ENCODE measurements at regions of chr5 and their contacts with region 1.

Region 1: DNA sequence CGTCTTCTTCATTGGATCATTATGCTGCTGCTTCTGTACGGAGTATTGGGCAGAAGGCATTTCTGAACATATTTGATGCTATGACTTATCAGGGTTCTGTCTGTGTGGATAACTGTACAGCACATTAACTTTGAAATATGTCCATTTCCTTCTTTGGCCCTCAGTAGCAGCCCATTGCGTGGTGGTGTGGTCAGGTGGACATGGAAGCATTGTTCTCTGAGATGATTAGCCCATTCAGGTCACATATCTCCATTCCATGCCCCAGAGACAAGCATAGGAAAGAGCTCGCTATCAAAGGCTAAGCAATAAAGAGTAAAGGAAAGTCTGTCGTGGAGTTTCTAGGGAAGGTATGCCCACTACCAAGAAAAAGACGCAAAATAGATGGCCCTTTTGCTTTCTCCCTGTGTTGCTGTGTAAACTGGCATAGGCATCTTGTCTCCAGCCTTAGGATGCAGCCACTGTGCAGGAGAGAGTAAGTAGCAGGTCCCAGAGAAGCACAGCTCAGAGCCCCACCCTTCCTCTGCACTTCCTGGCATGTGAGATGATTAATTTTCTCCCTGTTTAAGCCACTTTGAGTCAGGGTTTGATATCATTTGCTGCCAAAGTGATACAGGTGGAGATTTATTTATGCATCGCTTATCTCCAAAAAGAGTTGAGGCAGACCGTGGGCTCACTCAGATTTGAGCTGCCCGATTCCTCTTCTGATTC is 221.9 kb downstream of the PDZD2 start:
- DNase-seq: peak; percentile 55
- H3K4me3 Mint-ChIP-seq: no peak overlapping the region
- H3K27ac Mint-ChIP-seq: peak overlapping the region; percentile 59
- H3K4me1 Mint-ChIP-seq: peaks cover 29% of the 10 kb centered on the region
- H3K27me3 Mint-ChIP-seq: peaks cover 3% of the 10 kb centered on the region

Region 2: GRCh38 chr5:32027717-32028321 is 166.9 kb after region 1 on chr5:
- CTCF ChIA-PET with region 1: no interaction called
- intact Hi-C with region 1: loop called (anchors 1 kb)
- DNase-seq: no peak
- H3K4me3 Mint-ChIP-seq: no peak overlapping the region
- H3K27ac Mint-ChIP-seq: no peak overlapping the region
- H3K4me1 Mint-ChIP-seq: peaks cover 6% of the 10 kb centered on the region
- H3K27me3 Mint-ChIP-seq: no peaks in the 10 kb centered on the region

Measured in activated naive CD4-positive, alpha-beta T cell treated with anti-CD3 and anti-CD28 coated beads for 36 hours (primary cell).